CD14-positive monocyte (primary cell): ENCODE measurements at regions of chr9 and their contacts with region 1.

Region 1: GRCh38 chr9:107489687-107490605 is at the start of gene KLF4:
- DNase-seq: peak; percentile 91 to 96 (median 95)
- H3K4me3 ChIP-seq: peak within 1 kb of the TSS; percentile 94 to 100 (median 100)
- H3K4me3 Mint-ChIP-seq: peak within 1 kb of the TSS; percentile 98
- H3K27ac ChIP-seq: peak within 1 kb of the TSS; percentile 99
- H3K27ac Mint-ChIP-seq: peak within 1 kb of the TSS; percentile 96 to 99 (median 98)
- H3K4me1 ChIP-seq: peaks cover 55 to 59% of the 10 kb centered on the region in 2 donors
- H3K4me1 Mint-ChIP-seq: peaks cover 58% of the 10 kb centered on the region
- H3K27me3 ChIP-seq: peaks cover 0 to 13% of the 10 kb centered on the region in 2 donors
- H3K27me3 Mint-ChIP-seq: peaks cover 8 to 22% (median 20%) of the 10 kb centered on the region in 3 donors
- CTCF ChIP-seq: no peak
- polyA plus RNA-seq, gene KLF4: 36.6 to 512 (median 37.2) TPM

Region 2: GRCh38 chr9:107410388-107410785 is 79.6 kb before region 1 on chr9:
- intact Hi-C with region 1: no loop called
- DNase-seq: no peak
- H3K4me3 ChIP-seq: no peak overlapping the region
- H3K4me3 Mint-ChIP-seq: no peak overlapping the region
- H3K27ac ChIP-seq: no peak overlapping the region
- H3K27ac Mint-ChIP-seq: no peak overlapping the region
- H3K4me1 ChIP-seq: no peaks in the 10 kb centered on the region
- H3K4me1 Mint-ChIP-seq: no peaks in the 10 kb centered on the region
- H3K27me3 ChIP-seq: no peaks in the 10 kb centered on the region
- H3K27me3 Mint-ChIP-seq: peaks cover 2 to 14% (median 5%) of the 10 kb centered on the region in 3 donors
- CTCF ChIP-seq: no peak

Region 3: DNA sequence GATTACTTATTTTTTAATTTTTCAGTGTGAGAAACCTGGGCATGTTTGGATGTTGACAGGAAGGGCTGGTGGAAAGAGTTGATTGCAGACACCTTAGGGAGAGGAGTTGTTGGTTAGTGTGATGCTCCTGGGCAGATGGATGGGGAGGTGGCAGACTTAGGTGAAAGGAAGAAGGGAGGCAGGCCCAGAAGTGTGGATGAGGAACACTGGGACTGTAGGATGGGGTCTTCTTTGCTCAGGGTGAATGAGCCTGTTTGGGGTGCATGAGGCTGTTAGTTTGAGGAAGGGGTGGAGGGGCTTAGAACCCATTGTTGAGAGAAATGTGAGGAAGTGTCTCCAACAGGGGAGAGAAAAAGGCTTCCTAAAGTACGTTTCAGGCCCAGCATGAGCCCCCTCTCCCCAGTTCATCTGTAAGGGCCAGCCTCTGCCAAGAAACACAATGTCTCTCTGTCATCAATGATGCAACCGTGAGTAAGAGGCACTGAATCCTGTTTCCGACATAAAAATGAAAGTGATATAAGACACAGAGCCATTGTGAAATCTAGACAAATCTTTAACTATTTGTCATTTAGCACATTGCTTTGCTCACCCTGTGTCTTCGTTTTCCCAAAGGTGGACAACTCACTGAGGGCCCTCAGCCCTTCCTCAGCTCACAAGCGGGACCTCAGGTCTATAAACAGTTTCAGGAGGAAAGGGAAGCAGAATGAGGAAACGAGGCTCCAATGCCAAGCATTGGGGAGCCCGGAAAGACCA is 58.3 kb after region 1 on chr9:
- intact Hi-C with region 1: loop called (anchors 2 to 5 kb)
- DNase-seq: peak; percentile 90 to 95 (median 95)
- H3K4me3 ChIP-seq: peak overlapping the region; percentile 32 to 74 (median 72)
- H3K4me3 Mint-ChIP-seq: peak overlapping the region; percentile 75 to 87
- H3K27ac ChIP-seq: peak overlapping the region; percentile 85 to 96
- H3K27ac Mint-ChIP-seq: peak overlapping the region; percentile 96 to 99 (median 96)
- H3K4me1 ChIP-seq: peaks cover 24 to 28% of the 10 kb centered on the region in 2 donors
- H3K4me1 Mint-ChIP-seq: peaks cover 25% of the 10 kb centered on the region
- H3K27me3 ChIP-seq: no peaks in the 10 kb centered on the region
- H3K27me3 Mint-ChIP-seq: peaks cover 0 to 4% (median 0%) of the 10 kb centered on the region in 3 donors
- CTCF ChIP-seq: no peak

Region 4: GRCh38 chr9:107674721-107675277 is 184.9 kb after region 1 on chr9:
- intact Hi-C with region 1: loop called in 1 of 2 experiments (anchors 5 kb)
- DNase-seq: peak; percentile 88 to 93 (median 89)
- H3K4me3 ChIP-seq: peak overlapping the region in 1 of 3 experiments; percentile 34
- H3K4me3 Mint-ChIP-seq: peak overlapping the region; percentile 58 to 68
- H3K27ac ChIP-seq: peak overlapping the region; percentile 82 to 93
- H3K27ac Mint-ChIP-seq: peak overlapping the region; percentile 94 to 99 (median 98)
- H3K4me1 ChIP-seq: peaks cover 37 to 42% of the 10 kb centered on the region in 2 donors
- H3K4me1 Mint-ChIP-seq: peaks cover 45% of the 10 kb centered on the region
- H3K27me3 ChIP-seq: no peaks in the 10 kb centered on the region
- H3K27me3 Mint-ChIP-seq: peaks cover 0 to 5% (median 0%) of the 10 kb centered on the region in 3 donors
- CTCF ChIP-seq: peak; percentile 37

Region 5: DNA sequence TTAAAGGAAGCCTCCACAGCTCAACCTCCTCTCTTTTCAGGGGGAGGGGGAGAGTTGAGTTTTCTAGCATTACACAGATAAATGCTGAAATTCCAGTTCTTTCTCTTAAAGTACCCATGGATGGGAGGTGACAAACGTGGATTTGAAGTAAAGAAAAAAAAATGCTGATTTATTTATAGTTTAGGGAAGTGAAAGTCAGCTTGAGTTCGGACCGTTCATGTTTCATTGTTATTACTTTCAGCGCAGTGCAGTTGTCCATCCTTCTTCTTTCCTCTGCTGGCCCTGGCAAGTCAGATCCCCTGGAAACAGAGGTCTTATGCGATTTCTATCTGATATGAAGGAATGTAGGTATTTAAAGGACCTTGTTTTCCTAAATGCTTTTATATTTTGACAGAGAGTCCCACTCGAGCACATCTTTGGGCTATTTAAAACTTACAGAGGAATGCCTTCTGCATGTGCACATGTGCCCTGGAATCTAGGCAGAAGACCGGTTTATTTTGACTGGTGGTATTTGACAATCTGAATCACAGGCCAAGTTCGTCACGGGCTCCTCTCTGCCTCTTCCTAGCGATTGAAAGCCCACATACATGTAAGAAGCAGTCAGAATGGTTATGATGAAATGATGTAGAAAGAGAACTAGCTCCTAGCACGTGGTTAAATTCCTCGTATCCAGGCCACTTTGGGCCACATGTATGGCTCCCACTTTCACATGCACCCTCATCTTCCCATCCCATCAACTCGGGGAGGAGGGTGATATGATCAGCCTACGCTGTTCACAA is 384.8 kb after region 1 on chr9:
- intact Hi-C with region 1: loop called in 1 of 2 experiments (anchors 10 kb)
- DNase-seq: peak; percentile 62 to 79 (median 69)
- H3K4me3 ChIP-seq: peak overlapping the region in 1 of 3 experiments; percentile 46
- H3K4me3 Mint-ChIP-seq: peak overlapping the region in 1 of 2 donors; percentile 59
- H3K27ac ChIP-seq: peak overlapping the region; percentile 71 to 88
- H3K27ac Mint-ChIP-seq: peak overlapping the region; percentile 89 to 97 (median 95)
- H3K4me1 ChIP-seq: peaks cover 63 to 76% of the 10 kb centered on the region in 2 donors
- H3K4me1 Mint-ChIP-seq: peaks cover 78% of the 10 kb centered on the region
- H3K27me3 ChIP-seq: no peaks in the 10 kb centered on the region
- H3K27me3 Mint-ChIP-seq: no peaks in the 10 kb centered on the region
- CTCF ChIP-seq: no peak

Region 6: DNA sequence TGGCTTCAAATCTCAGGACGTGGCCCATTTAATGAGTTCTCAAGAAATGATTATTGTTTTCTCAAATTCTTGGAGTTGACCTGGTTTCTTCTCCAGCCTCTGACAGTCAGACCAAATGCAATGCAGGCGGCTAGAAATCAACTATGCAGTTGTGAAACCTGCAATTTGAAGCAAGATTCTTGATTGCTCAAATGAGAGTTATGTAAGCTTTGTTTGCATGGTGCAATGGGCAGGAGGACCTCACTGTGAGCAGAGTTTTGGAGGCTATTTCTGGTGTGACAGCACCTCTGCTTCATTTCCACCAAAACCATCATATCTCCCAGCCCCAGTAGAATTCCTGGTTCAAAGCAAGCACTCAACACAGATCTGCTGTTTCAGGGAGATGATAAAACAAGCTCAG is 499.6 kb after region 1 on chr9:
- intact Hi-C with region 1: loop called in 1 of 2 experiments (anchors 5 kb)
- DNase-seq: peak; percentile 84 to 91 (median 87)
- H3K4me3 ChIP-seq: peak overlapping the region in 1 of 3 experiments; percentile 48
- H3K4me3 Mint-ChIP-seq: peak overlapping the region in 1 of 2 donors; percentile 83
- H3K27ac ChIP-seq: peak overlapping the region; percentile 62 to 87
- H3K27ac Mint-ChIP-seq: peak overlapping the region; percentile 93 to 99 (median 96)
- H3K4me1 ChIP-seq: peaks cover 66 to 76% of the 10 kb centered on the region in 2 donors
- H3K4me1 Mint-ChIP-seq: peaks cover 74% of the 10 kb centered on the region
- H3K27me3 ChIP-seq: no peaks in the 10 kb centered on the region
- H3K27me3 Mint-ChIP-seq: peaks cover 0 to 4% (median 0%) of the 10 kb centered on the region in 3 donors
- CTCF ChIP-seq: no peak

Region 7: GRCh38 chr9:108621991-108622855 is 1132.3 kb after region 1 on chr9:
- intact Hi-C with region 1: loop called in 1 of 2 experiments (anchors 5 kb)
- DNase-seq: peak; percentile 86 to 97 (median 90)
- H3K4me3 ChIP-seq: peak overlapping the region in 1 of 3 experiments; percentile 26
- H3K4me3 Mint-ChIP-seq: peak overlapping the region in 1 of 2 donors; percentile 67
- H3K27ac ChIP-seq: peak overlapping the region; percentile 55 to 87
- H3K27ac Mint-ChIP-seq: peak overlapping the region; percentile 91 to 97 (median 94)
- H3K4me1 ChIP-seq: peaks cover 47 to 50% of the 10 kb centered on the region in 2 donors
- H3K4me1 Mint-ChIP-seq: peaks cover 52% of the 10 kb centered on the region
- H3K27me3 ChIP-seq: no peaks in the 10 kb centered on the region
- H3K27me3 Mint-ChIP-seq: peaks cover 0 to 2% (median 2%) of the 10 kb centered on the region in 3 donors
- CTCF ChIP-seq: no peak